ENCODE measurements at regions of chr6 and their contacts with region 1.

Region 1: GRCh38 chr6:119147101-119148053 is 68.9 kb upstream of the FAM184A start:
- DNase-seq: peak; percentile 27
- H3K4me3 Mint-ChIP-seq: no peak overlapping the region
- H3K27ac Mint-ChIP-seq: peak overlapping the region; percentile 77
- H3K4me1 Mint-ChIP-seq: peaks cover 62% of the 10 kb centered on the region
- H3K27me3 Mint-ChIP-seq: no peaks in the 10 kb centered on the region

Region 2: DNA sequence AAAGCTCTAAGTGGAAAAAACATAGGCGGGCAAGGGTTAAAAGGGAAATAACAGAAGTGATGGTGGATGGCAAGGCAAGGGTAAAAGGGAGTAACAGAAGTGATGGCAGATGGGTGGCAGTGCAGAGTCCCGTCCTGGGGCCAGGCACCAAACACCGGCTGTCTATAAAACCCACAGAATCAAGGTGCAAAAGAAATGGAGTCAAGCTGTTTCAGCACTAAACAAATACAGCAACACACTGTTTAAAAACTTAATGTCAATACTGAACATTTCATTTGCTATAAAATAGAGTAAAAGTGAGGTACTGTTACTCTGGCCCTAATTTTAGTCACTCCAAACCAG is 114.5 kb after region 1 on chr6:
- intact Hi-C with region 1: loop called (anchors 1 kb)
- DNase-seq: no peak
- H3K4me3 Mint-ChIP-seq: peak overlapping the region; percentile 46
- H3K27ac Mint-ChIP-seq: peak overlapping the region; percentile 91
- H3K4me1 Mint-ChIP-seq: peaks cover 50% of the 10 kb centered on the region
- H3K27me3 Mint-ChIP-seq: no peaks in the 10 kb centered on the region

Region 3: GRCh38 chr6:119463081-119463626 is 315.8 kb after region 1 on chr6:
- intact Hi-C with region 1: loop called (anchors 5 kb)
- DNase-seq: peak; percentile 22
- H3K4me3 Mint-ChIP-seq: peak overlapping the region; percentile 1
- H3K27ac Mint-ChIP-seq: peak overlapping the region; percentile 72
- H3K4me1 Mint-ChIP-seq: peaks cover 82% of the 10 kb centered on the region
- H3K27me3 Mint-ChIP-seq: no peaks in the 10 kb centered on the region

Region 4: GRCh38 chr6:119661628-119662027 is 514.3 kb after region 1 on chr6:
- intact Hi-C with region 1: no loop called
- DNase-seq: no peak
- H3K4me3 Mint-ChIP-seq: no peak overlapping the region
- H3K27ac Mint-ChIP-seq: no peak overlapping the region
- H3K4me1 Mint-ChIP-seq: no peaks in the 10 kb centered on the region
- H3K27me3 Mint-ChIP-seq: no peaks in the 10 kb centered on the region

Region 5: DNA sequence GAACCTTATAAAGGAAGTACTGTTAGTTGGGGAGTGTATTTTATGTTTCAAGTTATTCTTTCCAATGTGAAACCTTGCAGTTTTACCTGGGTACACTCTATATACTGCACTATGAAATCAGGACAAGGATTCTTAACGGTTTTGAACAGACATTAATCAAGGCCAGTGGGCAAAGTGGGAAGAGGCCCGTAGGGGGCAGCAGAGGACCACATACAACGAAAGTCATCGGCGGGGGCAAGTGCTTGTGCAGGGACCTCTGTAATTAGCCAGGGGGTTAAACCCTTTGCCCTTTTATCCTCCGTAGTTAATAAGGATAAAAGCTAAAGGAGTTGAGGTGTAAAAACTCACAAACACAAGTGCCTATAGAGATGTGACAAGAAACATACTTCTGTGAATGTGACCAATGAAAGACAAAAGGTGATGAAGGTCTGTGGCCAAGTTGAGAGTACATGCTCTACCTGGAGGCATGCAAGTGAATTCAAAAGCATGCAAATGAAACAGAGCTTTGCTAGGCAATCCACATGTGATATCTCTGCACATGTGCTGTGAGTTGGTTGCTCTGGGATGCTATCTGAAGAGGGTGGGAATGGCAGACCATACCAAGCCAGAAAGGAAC is 594.9 kb after region 1 on chr6:
- intact Hi-C with region 1: loop called (anchors 10 kb)
- DNase-seq: peak; percentile 16
- H3K4me3 Mint-ChIP-seq: no peak overlapping the region
- H3K27ac Mint-ChIP-seq: no peak overlapping the region
- H3K4me1 Mint-ChIP-seq: no peaks in the 10 kb centered on the region
- H3K27me3 Mint-ChIP-seq: peaks cover 10% of the 10 kb centered on the region

Region 6: GRCh38 chr6:119978274-119978889 is 831.0 kb after region 1 on chr6:
- intact Hi-C with region 1: loop called (anchors 10 kb)
- DNase-seq: no peak
- H3K4me3 Mint-ChIP-seq: no peak overlapping the region
- H3K27ac Mint-ChIP-seq: no peak overlapping the region
- H3K4me1 Mint-ChIP-seq: no peaks in the 10 kb centered on the region
- H3K27me3 Mint-ChIP-seq: peaks cover 2% of the 10 kb centered on the region

Measured in activated T-helper 1 cell treated with anti-CD3 and anti-CD28 coated beads, Interleukin-12 subunit alpha, Interleukin-12 subunit beta, Interleukin-2, Interleukin-4 antibody, amounts not matched to agents 30 ng/mL and 10 ng/mL and 1 ng/mL, durations not matched to agents 14 hours and 24 hours and 36 hours (primary cell).